Naive thymus-derived CD4-positive, alpha-beta T cell (primary cell): ENCODE measurements at regions of chr4 and their contacts with region 1.

Region 1: GRCh38 chr4:74583694-74584087 is 138.8 kb downstream of the AREG start:
- DNase-seq: no peak
- ATAC-seq: no peak
- H3K4me3 ChIP-seq: no peak overlapping the region
- H3K4me3 Mint-ChIP-seq: no peak overlapping the region
- H3K27ac ChIP-seq: no peak overlapping the region
- H3K27ac Mint-ChIP-seq: no peak overlapping the region
- H3K4me1 ChIP-seq: no peaks in the 10 kb centered on the region
- H3K4me1 Mint-ChIP-seq: peaks cover 0 to 4% (median 0%) of the 10 kb centered on the region in 7 donors
- H3K27me3 ChIP-seq: no peaks in the 10 kb centered on the region
- H3K27me3 Mint-ChIP-seq: peaks cover 0 to 4% (median 0%) of the 10 kb centered on the region in 5 donors

Region 2: GRCh38 chr4:74598611-74599290 is 15.1 kb after region 1 on chr4:
- CTCF ChIA-PET with region 1: no interaction called
- POLR2A ChIA-PET with region 1: no interaction called
- intact Hi-C with region 1: loop called in 1 of 2 experiments (anchors 1 kb)
- DNase-seq: no peak
- ATAC-seq: no peak
- H3K4me3 ChIP-seq: no peak overlapping the region
- H3K4me3 Mint-ChIP-seq: no peak overlapping the region
- H3K27ac ChIP-seq: no peak overlapping the region
- H3K27ac Mint-ChIP-seq: no peak overlapping the region
- H3K4me1 ChIP-seq: no peaks in the 10 kb centered on the region
- H3K4me1 Mint-ChIP-seq: no peaks in the 10 kb centered on the region
- H3K27me3 ChIP-seq: no peaks in the 10 kb centered on the region
- H3K27me3 Mint-ChIP-seq: peaks cover 0 to 13% (median 6%) of the 10 kb centered on the region in 5 donors